GM10248 (cell line): ENCODE measurements at regions of chr1 and their contacts with region 1.

Region 1: DNA sequence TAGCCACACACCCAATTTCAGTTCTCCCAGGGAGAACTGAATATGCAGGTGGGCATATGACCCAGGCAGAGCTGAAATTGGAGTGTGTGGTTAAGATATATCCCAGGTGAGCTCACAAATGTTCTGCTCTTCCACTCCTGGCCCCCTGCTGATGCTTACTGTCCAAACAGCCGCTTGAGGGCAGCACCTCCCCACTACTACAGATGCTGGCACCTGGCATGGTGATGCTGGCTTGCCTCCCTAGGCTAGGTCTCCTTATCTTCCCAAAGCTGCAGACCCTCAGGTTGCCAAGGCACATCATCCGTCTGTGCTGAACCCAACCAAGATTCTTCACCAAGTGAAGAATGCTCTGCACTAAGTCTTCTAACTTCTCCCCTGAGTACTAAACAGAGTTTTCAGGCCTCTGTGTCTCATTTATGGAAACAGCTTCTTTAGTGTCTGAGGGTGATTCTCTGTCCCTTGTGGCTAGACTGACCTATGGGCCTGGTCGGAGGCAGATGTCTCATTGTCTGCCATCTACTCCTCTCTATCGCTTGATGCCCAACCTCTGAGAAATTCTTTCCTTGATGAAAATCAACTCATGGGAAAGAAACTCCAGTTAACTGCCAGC is 27.2 kb downstream of the XCL1 start:
- DNase-seq: peak; percentile 67
- CTCF ChIP-seq: peak; percentile 69

Region 2: GRCh38 chr1:168567007-168567406 is 36.6 kb before region 1 on chr1:
- CTCF ChIA-PET with region 1: no interaction called
- POLR2A ChIA-PET with region 1: no interaction called
- DNase-seq: no peak
- CTCF ChIP-seq: no peak

Region 3: DNA sequence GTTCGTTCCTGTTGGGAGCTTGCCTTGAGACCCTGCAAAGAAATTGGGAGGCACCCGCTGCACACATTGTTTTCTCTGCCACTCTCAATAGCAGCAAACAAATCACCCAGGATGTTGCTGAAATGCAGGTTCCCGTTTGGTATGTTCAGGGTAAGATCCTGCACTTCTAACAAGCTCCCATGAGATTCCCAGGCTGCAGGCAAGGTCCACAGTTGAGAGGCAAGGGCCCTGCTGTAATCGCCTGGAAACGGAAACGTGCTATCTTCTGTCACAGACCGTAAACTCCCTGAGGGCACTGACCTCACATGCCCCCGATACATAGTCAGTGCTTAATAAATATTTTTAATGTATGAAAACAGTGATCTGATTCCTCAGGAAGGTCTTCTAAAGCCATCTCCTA is 10.6 kb after region 1 on chr1:
- CTCF ChIA-PET with region 1: interaction called, 11 read pairs
- POLR2A ChIA-PET with region 1: no interaction called
- DNase-seq: no peak
- CTCF ChIP-seq: no peak